AG04449 (cell line): ENCODE measurements at regions of chr17 and their contacts with region 1.

Region 1: GRCh38 chr17:7296189-7296902 is 1.9 kb upstream of the YBX2 start:
- DNase-seq: no peak
- H3K4me3 ChIP-seq: peak overlapping the region; percentile 20
- CTCF ChIP-seq: peak; percentile 89

Region 2: DNA sequence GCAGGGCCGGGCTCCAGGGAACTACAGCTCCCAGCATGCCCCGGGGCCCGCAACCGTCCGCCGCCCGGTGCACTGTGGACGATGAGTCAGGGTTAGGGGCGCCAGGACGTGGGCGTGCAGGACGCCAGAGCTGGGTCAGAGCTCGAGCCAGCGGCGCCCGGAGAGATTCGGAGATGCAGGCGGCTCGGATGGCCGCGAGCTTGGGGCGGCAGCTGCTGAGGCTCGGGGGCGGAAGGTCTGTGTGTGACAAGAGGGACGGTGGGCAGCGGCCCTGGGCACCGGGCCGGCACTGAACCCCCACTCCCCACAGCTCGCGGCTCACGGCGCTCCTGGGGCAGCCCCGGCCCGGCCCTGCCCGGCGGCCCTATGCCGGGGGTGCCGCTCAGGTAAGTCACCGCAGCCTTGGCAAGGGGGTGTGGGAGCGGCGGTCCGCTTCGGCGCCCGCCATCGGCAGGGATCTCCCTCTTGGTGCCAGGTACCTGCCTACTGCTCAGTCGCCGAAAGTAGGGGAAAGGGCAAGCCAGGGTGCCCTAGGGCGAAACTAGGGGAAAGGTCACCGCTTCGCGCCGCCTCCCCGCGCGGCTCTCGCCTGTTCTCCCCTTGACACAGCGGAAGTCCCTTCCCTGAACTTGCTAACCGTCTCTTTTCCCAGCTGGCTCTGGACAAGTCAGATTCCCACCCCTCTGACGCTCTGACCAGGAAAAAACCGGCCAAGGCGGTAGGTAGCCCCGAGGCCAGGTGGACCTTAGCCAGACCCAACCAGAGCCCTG is 76.3 kb before region 1 on chr17 and contains the starts of genes ACADVL and DLG4:
- CTCF ChIA-PET with region 1: interaction called, 37 read pairs
- POLR2A ChIA-PET with region 1: interaction called, 3 read pairs
- DNase-seq: no peak
- H3K4me3 ChIP-seq: peak within 1 kb of the TSS; percentile 83
- CTCF ChIP-seq: no peak

Region 3: DNA sequence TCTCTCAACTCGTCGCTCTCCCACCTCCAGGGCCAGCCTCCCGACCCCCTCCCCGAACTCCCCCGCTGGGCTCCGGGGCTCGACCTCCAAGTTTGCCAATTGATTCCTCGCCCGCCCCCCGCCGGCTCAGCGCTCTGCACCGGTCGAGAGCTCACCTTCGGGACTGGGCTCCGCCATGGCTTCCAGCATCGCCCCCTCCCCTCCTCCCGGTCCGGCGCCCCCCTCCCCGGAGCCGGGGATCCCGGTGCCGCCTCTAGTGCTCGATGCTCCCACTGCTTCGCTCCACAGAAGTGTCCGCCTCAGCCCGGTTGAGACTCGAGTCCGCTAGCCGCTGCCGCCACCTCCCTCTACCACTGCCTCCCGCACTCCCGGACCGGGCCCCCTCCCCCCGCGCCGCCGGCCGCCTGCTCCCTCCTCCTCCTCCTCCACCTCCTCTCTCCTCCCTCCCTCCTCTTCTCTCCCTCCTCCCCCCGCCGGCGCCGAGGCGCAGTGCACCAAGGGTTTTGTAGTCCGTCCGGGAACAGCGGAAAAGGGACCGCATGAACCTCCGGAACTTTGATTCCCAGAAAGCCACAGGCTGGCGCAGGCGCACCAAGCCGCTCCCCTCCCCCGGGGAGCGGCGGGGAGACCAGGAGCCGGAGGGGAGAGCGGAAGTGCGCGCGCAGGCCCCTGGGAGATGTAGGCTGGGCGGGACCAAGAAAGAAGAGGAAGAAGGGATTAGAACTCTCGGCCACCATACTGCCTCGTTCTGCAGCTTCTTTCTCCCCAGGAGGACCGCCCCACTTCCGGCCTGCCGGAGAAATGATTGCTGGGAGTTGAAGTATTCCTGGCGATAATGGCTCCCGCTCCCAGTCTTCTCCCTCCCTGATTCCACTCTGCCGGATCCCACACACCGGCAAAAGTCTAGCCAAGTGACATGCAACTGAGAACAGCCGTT is 57.0 kb before region 1 on chr17 and contains the start of gene PHF23:
- CTCF ChIA-PET with region 1: interaction called, 12 read pairs
- POLR2A ChIA-PET with region 1: no interaction called
- DNase-seq: peak; percentile 95
- H3K4me3 ChIP-seq: peak within 1 kb of the TSS; percentile 96
- CTCF ChIP-seq: no peak

Region 4: GRCh38 chr17:7263083-7264078 is 33.0 kb before region 1 on chr17:
- CTCF ChIA-PET with region 1: interaction called, 13 read pairs
- POLR2A ChIA-PET with region 1: no interaction called
- DNase-seq: no peak
- H3K4me3 ChIP-seq: no peak overlapping the region
- CTCF ChIP-seq: no peak

Region 5: GRCh38 chr17:7280519-7281429 is 15.6 kb before region 1 on chr17:
- CTCF ChIA-PET with region 1: interaction called, 255 read pairs
- POLR2A ChIA-PET with region 1: interaction called, 3 read pairs
- DNase-seq: no peak
- H3K4me3 ChIP-seq: peak overlapping the region; percentile 52
- CTCF ChIP-seq: peak; percentile 96

Region 6: DNA sequence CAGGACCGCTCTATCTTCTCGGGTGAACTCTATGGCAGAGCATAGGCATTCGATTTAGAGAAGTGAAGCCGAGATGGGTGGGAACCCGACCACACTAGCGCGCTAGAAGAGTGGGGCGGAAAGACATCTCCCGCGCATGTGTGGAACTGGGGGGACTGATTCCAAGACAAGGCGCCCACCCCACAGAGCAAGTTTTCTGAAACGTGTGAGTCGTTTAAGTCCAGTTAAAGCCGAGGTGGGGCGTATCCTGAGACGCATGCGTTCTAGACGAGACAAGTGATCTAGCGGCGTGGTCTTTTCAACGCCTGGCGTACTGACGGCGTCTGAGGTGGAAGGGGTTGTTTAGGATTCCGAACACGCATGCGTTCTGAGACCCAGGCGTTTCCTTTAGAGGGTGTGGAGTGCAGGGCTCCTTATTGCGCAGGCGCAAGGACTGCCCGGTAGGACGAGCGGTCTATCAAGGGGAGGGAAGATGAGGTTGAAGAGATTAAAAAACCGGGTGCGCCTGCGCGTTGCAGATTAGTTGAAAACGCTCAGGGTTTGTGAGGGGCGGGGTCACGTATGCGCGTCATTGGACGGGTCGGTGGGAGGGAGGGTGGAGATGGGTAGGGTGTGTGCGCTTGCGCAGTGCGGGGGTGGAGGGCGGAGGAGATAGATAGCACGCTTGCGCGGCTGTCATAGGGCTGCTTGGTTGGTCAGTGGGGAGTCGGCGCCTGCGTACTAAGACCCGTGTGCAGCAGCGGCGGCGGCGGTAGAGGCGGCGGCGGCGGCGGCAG is 10.8 kb after region 1 on chr17 and contains the start of gene EIF5A:
- CTCF ChIA-PET with region 1: interaction called, 15 read pairs
- POLR2A ChIA-PET with region 1: no interaction called
- DNase-seq: peak; percentile 99
- H3K4me3 ChIP-seq: peak within 1 kb of the TSS; percentile 92
- CTCF ChIP-seq: no peak

Region 7: DNA sequence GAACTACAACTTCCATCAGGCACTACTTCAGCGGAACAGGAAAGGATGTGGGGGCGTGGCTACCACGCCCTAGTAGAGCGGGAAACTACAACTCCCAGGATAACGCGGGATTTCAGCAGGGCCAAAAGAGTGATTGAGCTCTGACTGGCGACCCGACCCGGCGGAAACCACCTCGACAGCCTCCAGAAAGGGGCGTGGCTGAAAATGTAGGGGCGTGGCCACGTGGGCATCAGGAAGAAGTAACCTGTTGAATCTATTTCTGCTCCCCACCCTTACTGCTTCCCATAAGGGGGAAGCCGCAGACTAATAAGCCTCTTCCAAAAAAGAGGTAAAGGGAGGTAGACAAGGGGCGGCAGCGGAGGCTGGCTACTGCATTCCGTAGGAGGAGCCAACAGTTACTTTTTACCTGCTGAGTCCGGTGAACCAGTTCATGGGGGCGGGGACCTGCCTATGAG is 138.9 kb after region 1 on chr17 and contains the start of gene TMEM102:
- CTCF ChIA-PET with region 1: no interaction called
- POLR2A ChIA-PET with region 1: no interaction called
- DNase-seq: peak; percentile 40
- H3K4me3 ChIP-seq: peak within 1 kb of the TSS; percentile 56
- CTCF ChIP-seq: no peak